Gastrocnemius medialis (tissue), 4 donors: ENCODE measurements at regions of chr13 and their contacts with region 1.

Region 1: DNA sequence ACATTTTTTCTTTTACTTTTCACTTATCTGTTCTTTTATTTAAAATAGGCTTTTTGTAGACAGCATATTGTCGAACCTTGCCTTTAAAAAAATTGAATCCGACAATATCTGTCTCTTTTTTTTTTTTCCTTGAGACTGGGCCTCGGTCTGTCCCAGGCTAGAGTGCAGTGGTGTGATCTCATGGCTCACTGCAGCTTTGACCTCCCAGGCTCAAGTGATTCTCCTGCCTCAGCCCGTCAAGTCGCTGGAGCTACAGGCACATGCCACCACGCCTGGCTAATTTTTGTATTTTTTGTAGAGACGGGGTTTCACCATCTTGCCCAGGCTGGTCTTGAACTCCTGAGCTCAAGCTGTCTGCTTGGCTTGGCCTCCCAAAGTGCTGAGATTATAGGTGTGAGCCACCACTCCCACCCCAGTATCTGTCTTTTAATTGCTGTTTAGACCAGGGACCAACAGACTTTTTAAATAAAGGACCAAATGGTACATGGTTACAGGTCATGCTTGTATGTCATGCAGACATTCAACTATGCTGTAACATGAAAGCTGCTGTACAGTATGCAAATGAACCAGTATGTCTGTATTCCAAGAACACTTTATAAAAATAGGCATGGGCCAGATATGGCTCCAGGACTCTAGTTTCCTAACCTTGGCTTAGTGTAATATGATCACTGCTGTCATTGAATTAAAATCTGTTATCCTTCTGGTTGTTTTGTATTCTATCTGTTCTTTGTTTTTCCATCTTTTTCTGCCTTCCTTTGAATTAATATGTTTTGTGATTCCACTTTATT is 80.3 kb downstream of the GJA3 start:
- DNase-seq: no peak
- ATAC-seq: peak; percentile 91 to 94
- H3K4me3 ChIP-seq: no peak overlapping the region
- H3K27ac ChIP-seq: no peak overlapping the region
- H3K4me1 ChIP-seq: peaks cover 9 to 17% of the 10 kb centered on the region in 2 donors
- H3K27me3 ChIP-seq: no peaks in the 10 kb centered on the region
- CTCF ChIP-seq: no peak
- POLR2A ChIP-seq: no peak

Region 2: DNA sequence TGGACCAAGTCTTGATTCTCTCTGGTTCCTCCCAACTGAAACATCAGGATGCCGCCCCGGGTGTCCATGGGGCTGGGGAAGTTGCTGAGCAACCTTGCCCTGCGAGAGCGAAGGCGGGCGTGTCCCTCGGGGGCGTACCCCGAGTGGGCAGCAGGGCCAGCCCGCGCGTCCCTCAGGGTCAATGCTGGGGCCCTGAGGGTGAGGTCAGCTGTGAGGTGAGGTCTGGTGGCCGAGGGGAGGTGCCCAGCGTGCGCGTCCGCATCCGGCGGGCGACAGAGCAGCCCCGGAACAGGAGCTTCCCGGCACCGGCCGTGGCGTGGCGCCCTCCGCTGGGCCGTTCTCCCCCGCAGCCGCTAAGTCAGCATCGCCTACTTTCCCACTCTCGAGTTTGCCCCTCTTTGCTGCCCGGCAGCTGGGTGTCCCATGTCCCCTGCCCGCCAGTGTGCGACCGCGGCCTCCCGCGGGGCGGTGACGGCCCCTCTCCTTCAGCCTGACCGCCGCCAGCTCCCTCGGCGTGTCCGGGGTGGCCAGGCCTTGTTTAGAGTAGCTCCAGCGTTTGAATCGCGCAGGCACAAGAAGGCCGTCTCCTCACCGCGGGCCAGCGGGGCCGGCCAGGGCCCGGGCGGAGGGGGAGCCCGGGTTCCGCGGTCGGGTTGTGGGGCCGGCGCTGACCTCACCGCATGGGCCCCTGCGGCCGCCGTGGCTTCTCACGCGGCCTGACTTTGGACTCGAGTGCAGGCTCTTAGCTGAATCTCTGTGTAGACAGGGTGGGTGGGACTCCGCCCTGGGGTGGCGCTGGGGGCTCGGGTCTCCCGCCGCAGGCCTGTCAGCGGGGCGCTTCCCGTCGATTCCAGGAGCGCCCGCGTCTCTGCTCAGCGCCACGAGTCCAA is 47.3 kb after region 1 on chr13:
- in situ Hi-C with region 1: no loop called
- intact Hi-C with region 1: loop called (anchors 5 kb)
- DNase-seq: peak; percentile 47 to 60
- ATAC-seq: peak; percentile 80 to 83
- H3K4me3 ChIP-seq: peak overlapping the region; percentile 58 to 69 (median 66)
- H3K27ac ChIP-seq: peak overlapping the region; percentile 71 to 79 (median 72)
- H3K4me1 ChIP-seq: peaks cover 15 to 16% of the 10 kb centered on the region in 2 donors
- H3K27me3 ChIP-seq: no peaks in the 10 kb centered on the region
- CTCF ChIP-seq: peak in 3 of 5 experiments; percentile 25 to 58 (median 51)
- POLR2A ChIP-seq: peak in 1 of 2 donors; percentile 35